MCF 10A (cell line): ENCODE measurements at regions of chr1 and their contacts with region 1.

Region 1: GRCh38 chr1:168136709-168137514 is at the start of gene GPR161:
- DNase-seq: peak; percentile 65
- H3K4me3 Mint-ChIP-seq: peak within 1 kb of the TSS; percentile 87
- H3K27ac Mint-ChIP-seq: peak within 1 kb of the TSS; percentile 4
- H3K4me1 Mint-ChIP-seq: peaks cover 15% of the 10 kb centered on the region
- H3K27me3 Mint-ChIP-seq: no peaks in the 10 kb centered on the region
- CTCF ChIP-seq: no peak
- total RNA-seq, gene GPR161: 6.6 and 10.2 TPM in 2 replicates

Region 2: DNA sequence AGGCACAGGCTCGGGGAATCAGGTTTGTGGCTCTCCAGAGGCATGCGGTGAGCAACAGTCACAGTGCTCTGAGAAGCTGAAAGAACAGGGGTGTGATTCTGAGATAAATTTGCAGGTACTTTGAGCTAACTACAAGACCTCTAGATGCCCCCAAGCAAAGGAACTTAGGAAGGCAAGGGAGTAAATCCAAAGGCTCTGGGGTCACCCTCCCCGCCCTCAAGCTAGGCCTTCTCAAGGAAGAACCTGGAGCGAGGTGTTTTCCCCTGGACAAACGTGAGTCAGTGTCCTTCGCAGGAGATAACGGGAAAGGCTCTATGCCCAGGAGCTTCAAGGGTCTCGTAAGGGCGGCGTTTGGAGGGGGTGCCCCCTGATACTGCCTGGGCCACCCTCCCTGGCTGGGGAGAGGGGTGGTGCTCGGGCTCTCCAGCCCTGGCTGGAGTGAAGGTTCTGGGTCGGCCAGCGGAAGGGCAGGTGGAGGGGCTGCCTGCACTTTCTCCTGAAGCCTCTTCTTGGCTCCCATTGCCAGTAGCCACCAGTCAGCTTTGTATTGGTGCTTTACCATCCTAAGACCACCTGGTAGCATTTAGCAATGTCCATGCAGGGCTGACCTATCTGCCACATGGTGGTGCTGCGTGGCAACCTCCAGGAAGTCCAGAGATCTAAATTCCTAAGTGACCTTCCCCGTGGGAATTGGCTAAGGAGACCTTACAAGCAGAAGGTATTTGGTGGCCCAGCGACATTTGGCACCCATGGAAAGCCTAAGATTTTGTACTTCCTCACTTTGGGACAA is 44.2 kb before region 1 on chr1:
- CTCF ChIA-PET with region 1: interaction called, 14 read pairs
- POLR2A ChIA-PET with region 1: no interaction called
- intact Hi-C with region 1: loop called (anchors 2 kb)
- DNase-seq: peak; percentile 57
- H3K4me3 Mint-ChIP-seq: no peak overlapping the region
- H3K27ac Mint-ChIP-seq: no peak overlapping the region
- H3K4me1 Mint-ChIP-seq: peaks cover 4% of the 10 kb centered on the region
- H3K27me3 Mint-ChIP-seq: no peaks in the 10 kb centered on the region
- CTCF ChIP-seq: peak; percentile 61

Region 3: GRCh38 chr1:168112673-168113305 is 24.1 kb before region 1 on chr1:
- CTCF ChIA-PET with region 1: interaction called, 5 read pairs
- POLR2A ChIA-PET with region 1: interaction called, 10 read pairs
- intact Hi-C with region 1: no loop called
- DNase-seq: peak; percentile 100
- H3K4me3 Mint-ChIP-seq: peak overlapping the region; percentile 7
- H3K27ac Mint-ChIP-seq: peak overlapping the region; percentile 32
- H3K4me1 Mint-ChIP-seq: peaks cover 53% of the 10 kb centered on the region
- H3K27me3 Mint-ChIP-seq: no peaks in the 10 kb centered on the region
- CTCF ChIP-seq: no peak

Region 4: DNA sequence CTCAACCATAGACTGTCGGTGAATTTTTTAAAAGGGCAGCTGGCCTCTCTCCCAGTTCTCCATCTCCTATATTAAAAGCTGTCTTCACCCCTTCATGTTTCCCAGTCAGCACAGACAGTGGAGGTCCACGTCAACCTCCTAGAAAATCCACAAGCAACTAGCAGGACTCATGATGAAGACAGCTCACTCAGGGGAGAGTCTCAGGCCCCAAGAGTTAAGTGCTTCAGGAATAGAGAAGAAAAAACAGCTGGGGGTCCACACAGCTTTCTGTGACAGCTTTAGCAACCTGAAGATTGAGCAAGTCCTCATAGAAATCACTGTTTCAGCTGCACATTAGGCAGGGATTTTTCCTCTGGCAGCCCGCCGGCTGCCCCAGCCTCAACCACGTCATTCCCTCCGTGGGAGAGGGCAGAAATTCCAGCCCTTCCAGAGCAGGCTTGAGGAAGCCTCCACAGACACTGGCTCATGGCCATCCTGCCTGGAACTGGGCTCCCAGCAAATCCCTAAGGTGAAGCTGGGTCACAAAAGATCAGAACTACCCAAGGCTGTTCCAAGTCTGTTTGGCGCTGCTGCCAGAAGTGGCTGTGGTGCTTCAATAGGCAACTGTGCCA is 15.4 kb before region 1 on chr1:
- CTCF ChIA-PET with region 1: interaction called, 15 read pairs
- POLR2A ChIA-PET with region 1: interaction called, 14 read pairs
- intact Hi-C with region 1: no loop called
- DNase-seq: peak; percentile 92
- H3K4me3 Mint-ChIP-seq: no peak overlapping the region
- H3K27ac Mint-ChIP-seq: no peak overlapping the region
- H3K4me1 Mint-ChIP-seq: peaks cover 39% of the 10 kb centered on the region
- H3K27me3 Mint-ChIP-seq: no peaks in the 10 kb centered on the region
- CTCF ChIP-seq: no peak

Region 5: DNA sequence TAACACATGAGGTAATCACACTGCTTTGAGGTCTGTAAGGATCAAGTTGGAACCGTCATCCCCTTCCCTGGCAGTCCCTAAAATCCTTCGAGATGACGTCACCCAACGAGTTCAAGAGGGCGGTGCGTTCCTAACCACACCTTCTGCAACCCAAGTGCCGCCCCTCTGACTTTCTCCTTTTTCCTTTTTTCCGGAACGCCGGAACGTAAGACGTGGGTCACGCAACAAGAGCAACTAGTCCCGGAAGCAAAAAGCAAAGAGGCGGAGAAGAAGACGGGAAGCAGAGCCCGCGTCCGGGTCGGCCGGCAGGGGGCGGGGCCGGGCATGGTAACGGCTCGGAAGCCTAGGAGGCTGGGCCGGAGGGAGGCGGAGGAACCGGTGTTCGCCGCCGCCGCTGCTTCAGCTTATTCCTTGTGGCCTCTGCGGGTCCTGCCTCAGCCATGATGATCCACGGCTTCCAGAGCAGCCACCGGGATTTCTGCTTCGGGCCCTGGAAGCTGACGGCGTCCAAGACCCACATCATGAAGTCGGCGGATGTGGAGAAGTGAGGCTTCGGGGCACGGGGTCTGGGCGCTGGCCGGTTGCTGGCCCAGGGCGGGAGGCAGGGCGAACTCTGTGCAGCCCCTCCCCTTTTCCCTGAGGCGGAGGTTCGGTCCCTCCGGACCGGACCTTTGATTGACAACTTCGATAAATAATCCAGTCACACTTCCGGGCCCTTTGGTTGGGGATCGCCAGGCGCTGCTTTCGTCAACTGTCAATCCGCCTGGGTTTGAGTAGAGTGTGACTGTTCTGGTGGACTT is 41.9 kb after region 1 on chr1 and contains the start of gene TIPRL:
- CTCF ChIA-PET with region 1: interaction called, 4 read pairs
- POLR2A ChIA-PET with region 1: interaction called, 6 read pairs
- intact Hi-C with region 1: loop called (anchors 2 kb)
- DNase-seq: peak; percentile 100
- H3K4me3 Mint-ChIP-seq: no peak within 1 kb of the TSS
- H3K27ac Mint-ChIP-seq: no peak within 1 kb of the TSS
- H3K4me1 Mint-ChIP-seq: peaks cover 7% of the 10 kb centered on the region
- H3K27me3 Mint-ChIP-seq: no peaks in the 10 kb centered on the region
- CTCF ChIP-seq: peak; percentile 73
- total RNA-seq, gene TIPRL: 90.9 and 111 TPM in 2 replicates